ENCODE measurements at regions of chr11 and their contacts with region 1.

Region 1: DNA sequence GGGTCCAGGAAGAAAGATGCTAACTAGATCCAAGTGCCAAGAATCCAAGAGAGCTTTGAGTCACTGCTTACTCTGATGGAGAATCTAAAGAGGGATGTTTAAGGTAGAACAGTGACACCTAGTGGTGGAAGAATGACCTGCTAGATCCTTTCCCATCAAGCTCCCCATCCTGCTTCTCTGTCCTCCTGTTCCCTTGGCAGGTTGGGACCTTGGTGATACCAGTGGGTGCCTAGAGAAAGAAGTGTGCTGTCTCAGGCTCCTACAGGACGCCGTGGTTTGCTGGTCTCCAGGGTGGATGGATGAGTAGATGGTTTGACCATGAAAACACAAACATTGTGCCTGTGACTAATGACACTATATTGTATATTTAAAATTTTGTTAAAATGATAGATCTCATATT is 383.7 kb downstream of the TMEM135 start:
- DNase-seq: peak; percentile 79
- H3K4me3 Mint-ChIP-seq: no peak overlapping the region
- H3K27ac Mint-ChIP-seq: no peak overlapping the region
- H3K4me1 Mint-ChIP-seq: peaks cover 20% of the 10 kb centered on the region
- H3K27me3 Mint-ChIP-seq: no peaks in the 10 kb centered on the region
- CTCF ChIP-seq: peak; percentile 71

Region 2: DNA sequence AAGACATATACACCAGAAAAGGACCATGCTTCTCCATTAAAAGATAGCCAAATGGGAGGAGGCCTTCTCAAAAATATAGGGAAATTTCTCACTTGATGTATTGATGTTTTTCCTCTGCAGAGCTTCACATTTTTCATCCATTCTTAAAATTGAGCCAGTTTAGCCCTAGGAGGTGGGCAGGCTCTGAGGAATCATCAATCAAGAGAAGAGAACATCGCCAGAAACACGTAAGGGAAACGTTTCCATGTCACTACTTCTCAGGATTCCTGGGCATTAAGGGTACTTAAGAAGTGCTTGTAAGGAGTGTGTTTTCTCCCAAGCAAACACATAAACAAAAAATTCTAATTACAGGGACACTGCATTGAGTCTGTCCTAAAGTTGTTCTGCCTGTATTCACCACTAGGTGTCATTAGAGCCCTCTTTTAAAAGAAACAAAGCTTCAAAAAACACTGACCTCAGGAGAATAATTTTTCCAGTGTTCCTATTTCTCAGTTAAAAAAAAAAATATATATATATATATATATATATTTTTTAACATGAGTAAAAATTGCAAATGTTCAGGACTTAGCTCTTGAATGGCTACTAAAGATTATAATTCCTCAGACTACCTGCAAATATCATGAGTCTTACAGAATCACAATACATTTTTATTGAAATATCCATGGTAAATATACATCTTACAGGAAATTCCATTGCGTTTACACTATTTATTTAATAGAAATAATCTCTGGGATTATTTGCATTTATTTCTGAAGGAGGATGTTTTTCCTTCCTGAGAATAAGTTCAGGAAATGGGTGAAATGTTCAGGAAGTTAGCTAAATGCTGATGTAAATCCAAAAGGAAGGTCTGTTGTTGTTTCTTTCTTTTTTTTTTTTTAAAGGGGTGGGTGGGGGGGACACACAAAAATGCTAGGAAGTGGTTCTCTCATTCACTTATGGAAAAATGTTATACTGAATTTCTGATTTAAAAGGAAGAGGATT is 482.2 kb before region 1 on chr11:
- CTCF ChIA-PET with region 1: interaction called, 27 read pairs
- POLR2A ChIA-PET with region 1: interaction called, 3 read pairs
- intact Hi-C with region 1: loop called (anchors 5 kb)
- DNase-seq: peak; percentile 60
- H3K4me3 Mint-ChIP-seq: no peak overlapping the region
- H3K27ac Mint-ChIP-seq: no peak overlapping the region
- H3K4me1 Mint-ChIP-seq: peaks cover 8% of the 10 kb centered on the region
- H3K27me3 Mint-ChIP-seq: no peaks in the 10 kb centered on the region
- CTCF ChIP-seq: peak; percentile 54

Region 3: DNA sequence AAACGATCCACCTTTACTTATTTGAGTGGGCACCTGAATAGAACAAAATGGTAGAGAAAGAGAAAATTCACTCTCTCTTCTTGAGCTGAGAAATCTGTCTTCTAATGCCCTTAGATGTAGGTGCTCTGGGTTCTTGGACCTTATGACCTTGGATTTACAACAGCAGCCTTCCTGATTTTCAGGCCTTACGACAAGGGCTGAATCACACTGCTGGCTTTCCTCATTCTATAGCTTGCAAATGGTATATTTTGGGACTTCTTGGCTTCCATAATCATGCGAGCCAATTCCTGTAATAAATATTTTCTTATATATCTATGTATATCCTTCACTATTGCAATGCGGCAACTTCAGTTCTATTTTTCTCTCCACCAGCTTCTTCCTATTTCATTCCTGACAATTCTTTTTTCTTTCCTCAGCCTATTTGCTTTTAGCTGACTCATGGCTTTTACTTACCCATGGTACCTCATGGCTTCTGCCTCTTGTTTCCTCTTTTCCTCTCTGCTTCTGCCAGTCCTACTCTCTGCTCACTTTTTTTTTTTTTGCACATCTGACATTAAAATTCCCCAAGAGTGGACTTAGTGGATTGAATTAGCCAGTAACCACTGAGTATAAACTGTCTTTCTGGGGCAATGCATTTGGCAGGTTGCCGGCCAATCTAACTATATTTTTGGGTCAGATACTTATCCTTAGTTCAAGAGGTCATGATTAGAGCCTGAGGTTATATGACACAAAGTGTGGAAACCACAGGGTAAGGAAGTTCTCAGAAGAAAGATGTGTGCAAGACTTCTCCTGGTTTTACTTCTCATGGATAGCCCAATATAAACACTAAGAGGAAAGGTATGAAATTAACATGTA is 24.2 kb before region 1 on chr11:
- CTCF ChIA-PET with region 1: interaction called, 15 read pairs
- POLR2A ChIA-PET with region 1: no interaction called
- intact Hi-C with region 1: no loop called
- DNase-seq: no peak
- H3K4me3 Mint-ChIP-seq: no peak overlapping the region
- H3K27ac Mint-ChIP-seq: no peak overlapping the region
- H3K4me1 Mint-ChIP-seq: no peaks in the 10 kb centered on the region
- H3K27me3 Mint-ChIP-seq: no peaks in the 10 kb centered on the region
- CTCF ChIP-seq: no peak

Region 4: DNA sequence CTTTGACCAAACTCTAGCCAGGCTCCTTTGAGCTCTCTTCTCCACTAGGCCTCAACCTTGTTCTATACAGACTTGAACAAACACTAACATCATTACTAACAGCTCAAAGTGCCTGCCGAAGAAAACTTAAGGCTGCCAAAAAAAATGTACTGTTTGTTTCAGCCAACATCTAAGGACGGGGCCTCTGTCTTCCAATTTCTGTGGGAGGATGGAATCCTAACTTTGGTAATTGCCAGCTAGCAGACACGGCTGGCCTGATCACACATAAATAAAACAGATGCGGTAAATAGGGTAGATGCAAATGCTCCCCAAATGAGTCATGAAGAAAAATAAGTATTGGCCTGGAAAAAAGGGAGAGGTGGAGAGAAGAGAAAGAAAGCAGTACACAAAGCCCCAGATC is 10.6 kb after region 1 on chr11:
- CTCF ChIA-PET with region 1: interaction called, 29 read pairs
- POLR2A ChIA-PET with region 1: no interaction called
- intact Hi-C with region 1: no loop called
- DNase-seq: no peak
- H3K4me3 Mint-ChIP-seq: no peak overlapping the region
- H3K27ac Mint-ChIP-seq: no peak overlapping the region
- H3K4me1 Mint-ChIP-seq: peaks cover 5% of the 10 kb centered on the region
- H3K27me3 Mint-ChIP-seq: no peaks in the 10 kb centered on the region
- CTCF ChIP-seq: no peak

Region 5: GRCh38 chr11:87447606-87448005 is 26.2 kb after region 1 on chr11:
- CTCF ChIA-PET with region 1: interaction called, 10 read pairs
- POLR2A ChIA-PET with region 1: interaction called, 3 read pairs
- intact Hi-C with region 1: no loop called
- DNase-seq: no peak
- H3K4me3 Mint-ChIP-seq: no peak overlapping the region
- H3K27ac Mint-ChIP-seq: no peak overlapping the region
- H3K4me1 Mint-ChIP-seq: no peaks in the 10 kb centered on the region
- H3K27me3 Mint-ChIP-seq: no peaks in the 10 kb centered on the region
- CTCF ChIP-seq: no peak

Region 6: DNA sequence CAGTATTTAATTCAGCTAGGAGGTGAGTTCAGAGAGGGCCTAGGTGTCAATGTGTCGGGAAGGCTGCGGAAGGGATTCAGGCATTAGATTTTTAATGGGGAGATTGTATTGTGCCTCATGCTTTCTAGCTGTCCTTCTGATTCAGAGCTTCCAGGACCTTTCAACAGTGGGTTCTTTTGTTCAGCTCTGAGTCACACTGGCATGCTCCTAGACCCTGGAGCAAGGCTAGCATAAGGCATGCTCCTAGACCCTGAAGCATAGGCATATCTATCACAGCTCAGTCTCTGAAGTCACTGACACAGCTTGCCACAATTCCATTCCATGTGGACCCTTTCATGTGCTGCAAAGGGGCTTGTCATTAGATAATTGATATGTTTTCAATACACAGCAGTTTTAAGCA is 356.9 kb after region 1 on chr11:
- CTCF ChIA-PET with region 1: no interaction called
- POLR2A ChIA-PET with region 1: no interaction called
- intact Hi-C with region 1: no loop called
- DNase-seq: peak; percentile 6
- H3K4me3 Mint-ChIP-seq: no peak overlapping the region
- H3K27ac Mint-ChIP-seq: no peak overlapping the region
- H3K4me1 Mint-ChIP-seq: no peaks in the 10 kb centered on the region
- H3K27me3 Mint-ChIP-seq: peaks cover 8% of the 10 kb centered on the region
- CTCF ChIP-seq: no peak

Measured in MCF 10A (cell line).